Activated T-helper 1 cell treated with anti-CD3 and anti-CD28 coated beads, Interleukin-12 subunit alpha, Interleukin-12 subunit beta, Interleukin-2, Interleukin-4 antibody, amounts not matched to agents 30 ng/mL and 10 ng/mL and 1 ng/mL, durations not matched to agents 14 hours and 24 hours and 36 hours (primary cell): ENCODE measurements at regions of chr17 and their contacts with region 1.

Region 1: DNA sequence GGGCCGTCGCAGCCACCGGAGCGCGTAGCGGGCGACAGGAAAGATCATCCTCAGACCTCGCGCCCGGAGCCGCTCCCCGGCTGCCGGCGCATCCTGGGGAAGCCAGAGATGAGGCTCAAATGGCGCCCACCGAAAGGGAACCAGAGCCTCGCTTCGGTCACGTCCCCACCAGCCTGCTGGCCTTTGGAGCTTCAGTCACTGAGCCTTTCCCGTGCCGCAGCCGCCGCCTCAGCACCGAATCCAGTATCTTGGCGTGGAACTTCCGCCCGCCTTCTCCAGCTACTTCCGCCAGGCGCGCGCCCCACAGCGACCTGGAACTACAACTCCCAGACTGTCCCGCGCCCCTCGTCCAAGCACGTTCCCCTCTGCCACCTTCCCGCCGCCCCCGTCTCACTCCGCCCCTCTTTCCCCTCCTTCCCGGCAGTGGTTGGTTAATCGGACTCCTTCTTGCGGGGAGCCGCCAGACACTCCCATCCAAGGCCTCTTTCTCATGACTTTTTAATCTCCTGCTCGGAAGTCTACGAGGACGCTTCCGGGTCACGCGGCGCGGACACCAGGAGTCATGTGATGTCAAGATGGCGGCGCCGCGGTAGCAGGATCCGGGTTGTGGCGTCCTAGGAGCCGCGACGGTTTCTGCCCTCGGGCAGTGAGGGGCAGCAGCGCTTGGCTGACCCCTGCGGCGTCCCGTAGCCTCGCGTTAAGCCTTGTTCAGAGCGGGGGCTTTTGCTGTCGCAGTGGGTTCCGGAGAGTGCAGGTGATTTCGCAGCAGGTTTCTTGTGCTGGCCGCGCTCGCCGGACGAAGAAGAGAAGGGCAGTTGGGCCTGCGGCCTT is at the starts of genes SMCR8 and TOP3A:
- DNase-seq: peak; percentile 95
- H3K4me3 Mint-ChIP-seq: peak within 1 kb of the TSS; percentile 93
- H3K27ac Mint-ChIP-seq: peak within 1 kb of the TSS; percentile 100
- H3K4me1 Mint-ChIP-seq: peaks cover 75% of the 10 kb centered on the region
- H3K27me3 Mint-ChIP-seq: peaks cover 2% of the 10 kb centered on the region
- total RNA-seq, gene SMCR8: 18.7 and 19.2 TPM in 2 replicates
- total RNA-seq, gene TOP3A: 75.2 and 87.2 TPM in 2 replicates

Region 2: DNA sequence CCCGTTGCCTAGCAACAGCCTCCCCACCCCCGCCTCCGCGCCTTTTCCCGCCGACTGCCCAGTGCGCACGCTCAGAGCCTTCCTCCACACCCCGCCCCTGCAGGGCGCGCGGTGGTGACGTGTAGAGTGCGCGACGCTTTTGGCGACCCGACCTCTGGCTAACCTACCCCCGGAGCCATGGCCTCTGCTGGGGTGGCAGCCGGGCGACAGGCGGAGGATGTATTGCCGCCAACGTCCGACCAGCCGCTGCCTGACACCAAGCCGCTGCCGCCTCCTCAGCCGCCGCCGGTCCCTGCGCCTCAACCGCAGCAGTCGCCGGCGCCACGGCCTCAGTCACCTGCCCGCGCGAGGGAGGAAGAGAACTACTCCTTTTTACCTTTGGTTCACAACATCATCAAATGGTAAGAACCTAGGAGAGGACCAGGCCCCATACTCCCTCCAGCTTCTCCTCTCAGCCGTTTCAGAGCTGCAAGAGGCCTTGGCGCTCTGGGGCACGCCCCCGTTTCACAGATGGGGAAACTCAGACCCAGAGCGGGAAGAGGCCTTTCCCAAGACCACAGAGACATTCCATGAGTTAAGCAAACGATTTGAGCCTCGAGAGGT is 838.0 kb before region 1 on chr17 and contains the start of gene MED9:
- intact Hi-C with region 1: loop called (anchors 5 kb)
- DNase-seq: peak; percentile 91
- H3K4me3 Mint-ChIP-seq: peak within 1 kb of the TSS; percentile 95
- H3K27ac Mint-ChIP-seq: peak within 1 kb of the TSS; percentile 90
- H3K4me1 Mint-ChIP-seq: peaks cover 49% of the 10 kb centered on the region
- H3K27me3 Mint-ChIP-seq: peaks cover 16% of the 10 kb centered on the region
- total RNA-seq, gene MED9: 13.8 and 15.2 TPM in 2 replicates

Region 3: GRCh38 chr17:18087610-18088491 is 227.1 kb before region 1 on chr17 and contains the start of gene DRG2:
- intact Hi-C with region 1: loop called (anchors 1 kb)
- DNase-seq: peak; percentile 84
- H3K4me3 Mint-ChIP-seq: peak within 1 kb of the TSS; percentile 95
- H3K27ac Mint-ChIP-seq: peak within 1 kb of the TSS; percentile 96
- H3K4me1 Mint-ChIP-seq: peaks cover 17% of the 10 kb centered on the region
- H3K27me3 Mint-ChIP-seq: no peaks in the 10 kb centered on the region
- total RNA-seq, gene DRG2: 67.5 and 69.2 TPM in 2 replicates

Region 4: GRCh38 chr17:18260332-18261144 is 54.4 kb before region 1 on chr17 and contains the start of gene MIEF2:
- intact Hi-C with region 1: loop called (anchors 1 kb)
- DNase-seq: peak; percentile 91
- H3K4me3 Mint-ChIP-seq: peak within 1 kb of the TSS; percentile 82
- H3K27ac Mint-ChIP-seq: peak within 1 kb of the TSS; percentile 76
- H3K4me1 Mint-ChIP-seq: peaks cover 31% of the 10 kb centered on the region
- H3K27me3 Mint-ChIP-seq: no peaks in the 10 kb centered on the region
- total RNA-seq, gene MIEF2: 5.8 and 7.0 TPM in 2 replicates

Region 5: GRCh38 chr17:18363101-18364049 is 48.4 kb after region 1 on chr17 and contains the start of gene SHMT1:
- intact Hi-C with region 1: loop called (anchors 2 kb)
- DNase-seq: peak; percentile 93
- H3K4me3 Mint-ChIP-seq: peak within 1 kb of the TSS; percentile 93
- H3K27ac Mint-ChIP-seq: peak within 1 kb of the TSS; percentile 88
- H3K4me1 Mint-ChIP-seq: peaks cover 9% of the 10 kb centered on the region
- H3K27me3 Mint-ChIP-seq: no peaks in the 10 kb centered on the region
- total RNA-seq, gene SHMT1: 51.5 and 56.2 TPM in 2 replicates